ENCODE measurements at regions of chr9 and their contacts with region 1.

Region 1: GRCh38 chr9:105414947-105415661 is 32.7 kb upstream of the FSD1L start:
- DNase-seq: peak; percentile 25
- H3K4me3 Mint-ChIP-seq: no peak overlapping the region
- H3K27ac Mint-ChIP-seq: no peak overlapping the region
- H3K4me1 Mint-ChIP-seq: peaks cover 13% of the 10 kb centered on the region
- H3K27me3 Mint-ChIP-seq: peaks cover 46% of the 10 kb centered on the region

Region 2: DNA sequence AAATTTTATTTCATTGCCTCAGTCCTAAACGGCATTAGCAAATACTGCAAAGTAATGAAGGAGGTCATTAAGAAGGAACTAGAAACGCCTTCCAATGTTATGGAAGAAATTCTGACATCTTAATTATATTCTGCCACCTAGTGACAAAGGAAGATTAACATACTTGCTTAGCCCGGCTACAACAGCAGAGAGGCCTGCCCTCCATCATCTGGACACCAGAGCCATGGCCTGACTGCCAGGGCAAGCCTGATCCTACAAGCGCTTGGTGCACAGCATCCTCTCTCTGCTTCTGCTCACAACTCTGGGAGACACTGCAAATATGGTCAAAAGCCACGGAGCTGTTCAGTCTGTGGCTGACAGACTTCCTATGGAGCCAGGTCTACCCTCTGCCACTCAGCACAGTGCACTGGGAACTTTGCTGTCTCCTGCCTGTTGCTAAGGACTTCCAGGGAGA is 257.9 kb before region 1 on chr9:
- intact Hi-C with region 1: loop called (anchors 1 kb)
- DNase-seq: no peak
- H3K4me3 Mint-ChIP-seq: no peak overlapping the region
- H3K27ac Mint-ChIP-seq: no peak overlapping the region
- H3K4me1 Mint-ChIP-seq: peaks cover 6% of the 10 kb centered on the region
- H3K27me3 Mint-ChIP-seq: no peaks in the 10 kb centered on the region

Region 3: GRCh38 chr9:105457560-105458294 is 42.6 kb after region 1 on chr9:
- intact Hi-C with region 1: no loop called
- DNase-seq: no peak
- H3K4me3 Mint-ChIP-seq: no peak overlapping the region
- H3K27ac Mint-ChIP-seq: no peak overlapping the region
- H3K4me1 Mint-ChIP-seq: no peaks in the 10 kb centered on the region
- H3K27me3 Mint-ChIP-seq: no peaks in the 10 kb centered on the region

Measured in activated T-helper 1 cell treated with anti-CD3 and anti-CD28 coated beads, Interleukin-12 subunit alpha, Interleukin-12 subunit beta, Interleukin-2, Interleukin-4 antibody, amounts not matched to agents 30 ng/mL and 10 ng/mL and 1 ng/mL, durations not matched to agents 14 hours and 24 hours and 36 hours (primary cell).